ENCODE measurements at regions of chr11 and their contacts with region 1.

Region 1: DNA sequence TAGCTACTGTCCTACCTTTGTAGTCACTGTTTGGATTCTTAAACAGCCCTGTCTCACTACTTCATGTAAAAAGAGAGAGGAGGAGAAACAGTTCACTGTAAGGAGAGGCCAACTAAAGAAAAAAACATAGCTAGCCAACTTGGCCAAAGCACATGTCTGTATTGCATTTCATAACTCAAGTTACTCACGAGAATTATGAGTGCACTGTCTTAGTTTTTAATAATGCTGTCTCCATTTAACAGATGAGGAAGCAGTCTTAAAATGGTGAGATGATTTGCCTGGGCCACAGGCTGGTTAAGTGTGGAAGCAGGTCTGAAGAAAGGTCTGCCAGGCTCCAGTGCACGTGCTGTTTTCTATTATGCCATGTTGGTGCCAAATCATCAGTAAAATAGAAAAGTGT is 104.5 kb downstream of the UVRAG start:
- DNase-seq: no peak
- H3K4me3 ChIP-seq: no peak overlapping the region
- H3K27ac ChIP-seq: no peak overlapping the region
- H3K4me1 ChIP-seq: peaks cover 8% of the 10 kb centered on the region
- H3K27me3 ChIP-seq: no peaks in the 10 kb centered on the region
- CTCF ChIP-seq: no peak

Region 2: GRCh38 chr11:75878933-75879332 is 40.6 kb before region 1 on chr11:
- CTCF ChIA-PET with region 1: no interaction called
- POLR2A ChIA-PET with region 1: no interaction called
- intact Hi-C with region 1: no loop called
- DNase-seq: no peak
- H3K4me3 ChIP-seq: no peak overlapping the region
- H3K27ac ChIP-seq: no peak overlapping the region
- H3K4me1 ChIP-seq: no peaks in the 10 kb centered on the region
- H3K27me3 ChIP-seq: no peaks in the 10 kb centered on the region
- CTCF ChIP-seq: no peak

Region 3: GRCh38 chr11:76025068-76025467 is 105.5 kb after region 1 on chr11:
- CTCF ChIA-PET with region 1: no interaction called
- POLR2A ChIA-PET with region 1: interaction called, 13 read pairs
- intact Hi-C with region 1: no loop called
- DNase-seq: peak; percentile 33
- H3K4me3 ChIP-seq: no peak overlapping the region
- H3K27ac ChIP-seq: no peak overlapping the region
- H3K4me1 ChIP-seq: peaks cover 8% of the 10 kb centered on the region
- H3K27me3 ChIP-seq: no peaks in the 10 kb centered on the region
- CTCF ChIP-seq: no peak

Measured in A673 (cell line).